Caco-2 (cell line): ENCODE measurements at regions of chr4 and their contacts with region 1.

Region 1: DNA sequence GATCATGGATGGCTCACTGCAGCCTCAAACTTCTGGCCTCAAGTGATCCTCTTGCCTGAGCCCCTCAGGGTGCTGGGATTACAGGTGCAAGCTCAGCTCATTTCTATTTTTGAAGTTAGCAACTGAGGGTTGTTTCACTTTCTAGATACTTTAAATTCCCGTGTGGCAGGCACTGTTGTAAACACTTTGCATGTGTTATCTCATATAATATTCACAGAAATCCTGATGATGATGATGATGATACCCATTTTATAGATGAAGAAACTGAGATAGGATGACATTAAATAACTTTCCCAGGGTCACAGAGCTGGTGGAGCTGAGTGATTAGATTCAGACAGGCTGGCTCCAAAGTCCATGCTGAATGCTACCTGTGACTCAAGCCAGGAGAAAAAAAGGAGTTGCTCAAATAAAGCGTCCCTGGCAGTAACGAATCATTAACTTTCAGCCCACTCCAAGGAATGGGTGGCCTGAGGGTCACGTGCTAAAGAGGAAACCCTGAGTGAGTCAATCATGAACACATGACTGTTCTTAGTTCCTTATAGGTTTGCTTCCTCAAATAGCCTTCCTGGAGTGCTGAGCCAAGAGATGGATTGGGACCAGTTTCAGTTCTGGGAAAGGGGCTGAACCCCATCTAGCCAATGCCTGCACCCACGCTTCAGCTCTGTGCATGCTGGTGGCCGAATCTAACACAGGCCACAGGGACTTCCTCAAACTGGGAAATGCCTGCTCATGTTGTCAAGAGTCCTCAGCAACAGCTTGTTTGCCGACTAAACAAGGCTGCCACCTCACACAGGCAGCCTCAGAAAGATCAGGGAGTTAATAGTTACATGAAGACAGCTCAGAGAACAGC is 52.8 kb downstream of the RBM47 start:
- DNase-seq: peak; percentile 92 to 96
- H3K4me3 ChIP-seq: peak overlapping the region; percentile 14
- H3K4me3 Mint-ChIP-seq: peak overlapping the region; percentile 73
- H3K27ac Mint-ChIP-seq: peak overlapping the region; percentile 97
- H3K4me1 ChIP-seq: peaks cover 33% of the 10 kb centered on the region
- H3K4me1 Mint-ChIP-seq: peaks cover 45% of the 10 kb centered on the region
- H3K27me3 ChIP-seq: no peaks in the 10 kb centered on the region
- H3K27me3 Mint-ChIP-seq: no peaks in the 10 kb centered on the region
- CTCF ChIP-seq: no peak

Region 2: GRCh38 chr4:40321671-40322165 is 255.1 kb before region 1 on chr4:
- CTCF ChIA-PET with region 1: no interaction called
- POLR2A ChIA-PET with region 1: no interaction called
- intact Hi-C with region 1: no loop called
- DNase-seq: no peak
- H3K4me3 ChIP-seq: no peak overlapping the region
- H3K4me3 Mint-ChIP-seq: no peak overlapping the region
- H3K27ac Mint-ChIP-seq: no peak overlapping the region
- H3K4me1 ChIP-seq: peaks cover 14% of the 10 kb centered on the region; the same call in 1 of the 2 replicates
- H3K4me1 Mint-ChIP-seq: peaks cover 26% of the 10 kb centered on the region
- H3K27me3 ChIP-seq: no peaks in the 10 kb centered on the region
- H3K27me3 Mint-ChIP-seq: no peaks in the 10 kb centered on the region
- CTCF ChIP-seq: no peak

Region 3: GRCh38 chr4:40515398-40516293 is 61.2 kb before region 1 on chr4:
- CTCF ChIA-PET with region 1: interaction called, 3 read pairs
- POLR2A ChIA-PET with region 1: no interaction called
- intact Hi-C with region 1: loop called (anchors 2 kb)
- DNase-seq: peak; percentile 79 to 91
- H3K4me3 ChIP-seq: peak overlapping the region; percentile 62
- H3K4me3 Mint-ChIP-seq: peak overlapping the region; percentile 85
- H3K27ac Mint-ChIP-seq: peak overlapping the region; percentile 83
- H3K4me1 ChIP-seq: peaks cover 30% of the 10 kb centered on the region
- H3K4me1 Mint-ChIP-seq: peaks cover 27% of the 10 kb centered on the region
- H3K27me3 ChIP-seq: no peaks in the 10 kb centered on the region
- H3K27me3 Mint-ChIP-seq: no peaks in the 10 kb centered on the region
- CTCF ChIP-seq: no peak

Region 4: DNA sequence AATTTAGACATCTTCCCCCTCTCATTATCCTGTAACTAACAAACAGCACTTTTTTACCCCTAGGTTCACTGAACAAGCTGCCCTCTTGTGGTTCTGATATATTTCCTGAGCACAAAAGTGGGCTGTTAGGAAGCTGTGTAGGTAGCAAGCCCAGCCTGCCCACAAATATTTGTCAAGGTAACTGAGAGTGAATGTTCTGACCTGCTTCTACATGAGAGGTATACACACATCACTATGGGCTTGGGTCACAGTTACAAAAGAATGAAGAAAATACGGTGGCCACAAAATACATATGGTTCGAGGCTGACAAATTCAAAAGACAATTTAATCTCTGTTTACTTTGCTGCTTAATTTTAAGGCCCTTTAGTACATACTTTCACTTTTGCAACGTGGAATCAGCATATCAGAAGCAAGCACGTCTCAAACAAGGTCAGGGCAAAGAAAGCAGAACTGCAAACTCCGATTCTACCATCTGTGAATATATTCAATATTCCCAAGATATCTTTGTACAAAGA is 25.9 kb before region 1 on chr4:
- CTCF ChIA-PET with region 1: no interaction called
- POLR2A ChIA-PET with region 1: no interaction called
- intact Hi-C with region 1: loop called (anchors 1 kb)
- DNase-seq: peak in 1 of 2 experiments; percentile 55
- H3K4me3 ChIP-seq: no peak overlapping the region
- H3K4me3 Mint-ChIP-seq: peak overlapping the region; percentile 43
- H3K27ac Mint-ChIP-seq: no peak overlapping the region
- H3K4me1 ChIP-seq: peaks cover 39% of the 10 kb centered on the region
- H3K4me1 Mint-ChIP-seq: peaks cover 20% of the 10 kb centered on the region
- H3K27me3 ChIP-seq: no peaks in the 10 kb centered on the region
- H3K27me3 Mint-ChIP-seq: no peaks in the 10 kb centered on the region
- CTCF ChIP-seq: peak; percentile 20 to 66

Region 5: DNA sequence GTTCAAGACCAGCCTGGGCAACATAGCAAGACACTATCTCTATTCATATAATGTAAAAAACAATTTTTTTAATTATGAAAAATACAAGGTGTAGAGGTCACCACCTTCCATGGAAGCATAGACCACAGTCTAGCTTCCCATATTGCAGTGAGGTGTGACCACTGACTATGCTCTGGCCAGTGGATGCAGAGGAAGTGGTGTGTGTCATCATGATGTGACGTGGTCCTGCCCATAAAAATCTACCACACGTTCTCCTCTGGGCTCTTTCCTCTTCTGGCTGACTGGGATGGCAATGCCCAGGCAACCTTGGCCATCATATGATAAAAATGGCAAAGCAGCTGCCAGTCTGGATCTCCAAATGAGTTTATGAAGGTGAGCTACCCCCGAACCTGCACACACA is 12.9 kb before region 1 on chr4:
- CTCF ChIA-PET with region 1: no interaction called
- POLR2A ChIA-PET with region 1: interaction called, 18 read pairs
- intact Hi-C with region 1: loop called (anchors 1 kb)
- DNase-seq: no peak
- H3K4me3 ChIP-seq: no peak overlapping the region
- H3K4me3 Mint-ChIP-seq: no peak overlapping the region
- H3K27ac Mint-ChIP-seq: peak overlapping the region; percentile 80
- H3K4me1 ChIP-seq: peaks cover 60% of the 10 kb centered on the region
- H3K4me1 Mint-ChIP-seq: peaks cover 26% of the 10 kb centered on the region
- H3K27me3 ChIP-seq: no peaks in the 10 kb centered on the region
- H3K27me3 Mint-ChIP-seq: no peaks in the 10 kb centered on the region
- CTCF ChIP-seq: no peak

Region 6: GRCh38 chr4:40629401-40630334 is 52.8 kb after region 1 on chr4 and contains the start of gene RBM47:
- CTCF ChIA-PET with region 1: no interaction called
- POLR2A ChIA-PET with region 1: no interaction called
- intact Hi-C with region 1: loop called (anchors 1 kb)
- DNase-seq: peak; percentile 81 to 88
- H3K4me3 ChIP-seq: peak within 1 kb of the TSS; percentile 51
- H3K4me3 Mint-ChIP-seq: peak within 1 kb of the TSS; percentile 86
- H3K27ac Mint-ChIP-seq: peak within 1 kb of the TSS; percentile 94
- H3K4me1 ChIP-seq: peaks cover 12% of the 10 kb centered on the region
- H3K4me1 Mint-ChIP-seq: peaks cover 25% of the 10 kb centered on the region
- H3K27me3 ChIP-seq: no peaks in the 10 kb centered on the region
- H3K27me3 Mint-ChIP-seq: no peaks in the 10 kb centered on the region
- CTCF ChIP-seq: no peak
- total RNA-seq, gene RBM47: 59.1 and 62.1 TPM in 2 replicates

Region 7: GRCh38 chr4:40662962-40663604 is 86.2 kb after region 1 on chr4:
- CTCF ChIA-PET with region 1: no interaction called
- POLR2A ChIA-PET with region 1: no interaction called
- intact Hi-C with region 1: loop called (anchors 2 kb)
- DNase-seq: peak; percentile 50 to 52
- H3K4me3 ChIP-seq: 0 out of 2 replicates have a peak overlapping the region, but pooled peaks have one; percentile 5
- H3K4me3 Mint-ChIP-seq: peak overlapping the region; percentile 47
- H3K27ac Mint-ChIP-seq: peak overlapping the region; percentile 28
- H3K4me1 ChIP-seq: peaks cover 15% of the 10 kb centered on the region; the same call in 1 of the 2 replicates
- H3K4me1 Mint-ChIP-seq: peaks cover 13% of the 10 kb centered on the region
- H3K27me3 ChIP-seq: no peaks in the 10 kb centered on the region
- H3K27me3 Mint-ChIP-seq: no peaks in the 10 kb centered on the region
- CTCF ChIP-seq: no peak